ENCODE measurements at regions of chr7 and their contacts with region 1.

Region 1: GRCh38 chr7:111752022-111752582 is 189.8 kb upstream of the IMMP2L start:
- ATAC-seq: peak in 3 of 8 experiments; percentile 87 to 88 (median 87)
- H3K4me3 ChIP-seq: no peak overlapping the region
- H3K27ac ChIP-seq: no peak overlapping the region
- H3K4me1 ChIP-seq: no peaks in the 10 kb centered on the region

Region 2: GRCh38 chr7:111855161-111855856 is 103.2 kb after region 1 on chr7:
- in situ Hi-C with region 1: loop called in 2 of 9 experiments (anchors 25 kb)
- ATAC-seq: peak in 6 of 8 experiments; percentile 55 to 97 (median 91)
- H3K4me3 ChIP-seq: no peak overlapping the region
- H3K27ac ChIP-seq: no peak overlapping the region
- H3K4me1 ChIP-seq: peaks cover 0 to 2% of the 10 kb centered on the region in 2 donors

Region 3: GRCh38 chr7:112112822-112113255 is 360.7 kb after region 1 on chr7:
- in situ Hi-C with region 1: loop called in 1 of 9 experiments (anchors 25 kb)
- ATAC-seq: peak in 2 of 8 experiments; percentile 88 to 95
- H3K4me3 ChIP-seq: no peak overlapping the region
- H3K27ac ChIP-seq: no peak overlapping the region
- H3K4me1 ChIP-seq: no peaks in the 10 kb centered on the region

Region 4: DNA sequence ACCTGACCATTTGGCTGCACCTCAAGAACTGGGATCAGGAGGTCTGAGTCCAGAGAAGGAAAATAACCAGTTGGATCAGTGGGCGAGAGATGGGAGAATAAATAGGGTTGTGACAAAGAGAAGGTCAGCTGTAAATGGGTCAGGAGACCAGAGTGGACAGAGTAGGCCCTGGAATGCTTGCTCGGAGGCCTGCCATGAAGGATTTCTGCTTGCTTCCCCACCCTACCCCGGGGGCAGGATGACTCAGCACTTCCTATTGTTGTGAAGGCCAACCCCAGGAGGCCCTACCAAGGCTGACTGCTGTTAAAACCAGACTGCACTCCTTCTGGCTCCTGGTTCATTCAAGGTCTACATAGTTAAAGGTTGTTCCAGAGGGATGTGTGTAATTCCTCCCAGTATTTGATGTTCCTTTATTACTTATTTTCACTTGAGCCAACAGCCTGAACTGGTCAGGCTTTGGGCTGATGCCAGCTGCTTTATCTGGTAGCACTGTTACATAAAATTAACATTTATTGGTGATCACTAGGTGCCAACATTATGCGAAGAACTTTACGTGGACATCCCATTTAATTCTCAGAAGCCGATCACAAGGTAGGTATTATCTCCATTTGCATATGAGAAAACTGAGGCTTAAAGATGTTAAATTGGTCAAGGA is 670.9 kb after region 1 on chr7:
- in situ Hi-C with region 1: loop called in 5 of 9 experiments (anchors 25 kb)
- ATAC-seq: peak; percentile 56 to 95 (median 86)
- H3K4me3 ChIP-seq: no peak overlapping the region
- H3K27ac ChIP-seq: peak overlapping the region in 1 of 2 donors; percentile 30
- H3K4me1 ChIP-seq: peaks cover 17 to 23% of the 10 kb centered on the region in 2 donors

Region 5: GRCh38 chr7:113710310-113711106 is 1958.4 kb after region 1 on chr7:
- in situ Hi-C with region 1: loop called in 1 of 9 experiments (anchors 25 kb)
- ATAC-seq: peak in 7 of 8 experiments; percentile 36 to 90 (median 63)
- H3K4me3 ChIP-seq: no peak overlapping the region
- H3K27ac ChIP-seq: no peak overlapping the region
- H3K4me1 ChIP-seq: no peaks in the 10 kb centered on the region